ENCODE measurements at regions of chr9 and their contacts with region 1.

Region 1: DNA sequence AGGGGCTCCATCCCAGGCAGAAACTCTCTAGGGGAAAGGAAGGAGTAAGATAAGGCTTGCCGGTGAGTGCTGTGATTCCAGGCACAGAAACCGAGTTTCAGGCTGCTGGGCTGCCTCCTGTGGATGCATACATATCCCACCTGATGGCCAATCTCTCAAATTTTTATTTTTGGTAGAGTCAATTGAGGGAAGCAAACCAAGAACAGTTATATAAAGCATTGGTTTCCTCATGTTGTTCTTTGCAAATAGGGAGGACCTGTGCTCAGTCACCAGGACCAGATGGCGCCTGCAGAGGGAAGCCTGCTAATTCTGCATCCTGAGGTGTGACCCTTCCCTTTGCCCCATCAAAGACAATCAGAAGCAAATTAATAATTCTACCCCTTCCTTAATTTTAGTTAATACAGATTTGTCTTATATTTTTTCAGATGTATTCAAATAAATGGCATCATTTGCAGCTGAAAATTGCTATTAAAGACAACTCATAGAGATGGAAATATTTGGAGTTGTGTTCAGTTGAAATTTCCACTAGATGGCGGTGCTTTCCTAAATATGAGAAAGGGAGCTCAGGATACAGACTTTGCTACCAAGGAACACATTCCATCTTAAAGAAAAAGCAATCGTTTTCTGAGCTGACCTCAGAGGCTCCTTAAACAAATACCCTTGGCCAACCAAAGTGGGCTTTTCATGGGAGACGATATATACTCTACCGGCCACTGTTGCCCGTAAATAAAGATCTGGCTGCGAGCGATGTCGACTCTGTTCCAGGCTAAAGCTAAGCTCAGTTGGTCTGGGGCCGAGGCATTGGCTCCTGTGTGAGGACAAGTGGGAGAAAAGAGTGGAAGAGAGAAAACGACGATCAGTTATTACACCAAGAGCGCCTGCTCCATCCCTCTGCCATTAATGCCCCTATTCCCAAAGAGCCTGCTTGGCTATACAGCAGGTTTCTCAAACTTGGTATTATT is 225.7 kb upstream of the KLF9 start:
- DNase-seq: no peak
- H3K4me3 ChIP-seq: no peak overlapping the region
- H3K27ac ChIP-seq: no peak overlapping the region
- H3K4me1 ChIP-seq: no peaks in the 10 kb centered on the region
- H3K27me3 ChIP-seq: no peaks in the 10 kb centered on the region
- CTCF ChIP-seq: peak; percentile 49 to 76 (median 65)
- EP300 ChIP-seq: no peak
- POLR2A ChIP-seq: no peak

Region 2: DNA sequence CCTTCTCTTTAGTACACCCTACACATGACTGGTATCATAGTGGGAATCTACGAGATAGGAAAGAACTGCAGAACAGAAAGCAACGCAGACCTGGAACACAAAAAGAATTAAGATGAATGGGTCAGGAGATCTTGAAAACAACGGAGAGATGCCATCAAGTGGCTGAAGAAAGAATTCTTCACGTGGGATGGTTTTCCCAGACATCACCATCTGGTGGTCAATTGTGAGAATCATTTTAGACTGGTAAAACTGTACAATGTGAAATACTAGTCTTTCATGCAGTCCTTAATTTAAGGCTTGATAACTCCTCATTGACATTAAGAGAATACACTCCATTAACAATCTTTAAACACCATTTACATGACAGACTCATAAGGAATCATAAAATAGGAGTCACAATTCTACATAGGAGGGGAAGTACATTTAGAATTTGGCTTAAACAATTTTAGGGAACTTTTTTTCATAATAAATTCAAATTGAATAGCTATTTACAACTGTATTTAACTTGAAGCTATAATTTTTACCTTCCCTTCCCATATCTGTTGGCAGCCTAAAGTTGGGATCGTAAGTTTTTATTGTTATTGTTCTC is 609.7 kb after region 1 on chr9:
- intact Hi-C with region 1: loop called in 3 of 4 experiments (anchors 5 to 10 kb)
- DNase-seq: no peak
- H3K4me3 ChIP-seq: no peak overlapping the region
- H3K27ac ChIP-seq: no peak overlapping the region
- H3K4me1 ChIP-seq: no peaks in the 10 kb centered on the region
- H3K27me3 ChIP-seq: no peaks in the 10 kb centered on the region
- CTCF ChIP-seq: peak; percentile 32 to 48 (median 44)
- EP300 ChIP-seq: no peak
- POLR2A ChIP-seq: no peak

Measured in ovary (tissue), 10 donors.